ENCODE measurements at regions of chrX and their contacts with region 1.

Region 1: DNA sequence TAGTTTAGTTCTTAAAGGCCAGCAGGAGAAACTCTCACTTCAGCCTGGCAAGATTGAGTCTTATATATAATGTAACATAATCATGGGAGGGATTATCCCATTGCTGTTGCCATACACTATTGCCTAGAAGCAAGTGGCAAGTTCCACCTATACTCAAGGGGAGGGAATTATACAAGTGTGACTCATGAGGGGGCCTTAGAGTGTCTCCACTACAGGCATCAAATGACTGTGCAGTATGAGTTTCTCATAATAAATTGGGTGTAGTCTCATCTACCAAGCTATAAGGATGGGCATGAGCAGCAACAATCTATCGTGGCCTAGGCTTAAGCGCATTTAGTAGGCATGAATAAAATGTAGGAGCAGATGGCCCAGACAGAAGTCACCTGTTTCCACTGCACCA is 89.1 kb upstream of the C1GALT1C1 start:
- DNase-seq: no peak
- H3K4me3 ChIP-seq: no peak overlapping the region
- H3K27ac ChIP-seq: no peak overlapping the region
- H3K4me1 ChIP-seq: no peaks in the 10 kb centered on the region
- H3K27me3 ChIP-seq: no peaks in the 10 kb centered on the region
- CTCF ChIP-seq: no peak
- POLR2A ChIP-seq: no peak

Region 2: DNA sequence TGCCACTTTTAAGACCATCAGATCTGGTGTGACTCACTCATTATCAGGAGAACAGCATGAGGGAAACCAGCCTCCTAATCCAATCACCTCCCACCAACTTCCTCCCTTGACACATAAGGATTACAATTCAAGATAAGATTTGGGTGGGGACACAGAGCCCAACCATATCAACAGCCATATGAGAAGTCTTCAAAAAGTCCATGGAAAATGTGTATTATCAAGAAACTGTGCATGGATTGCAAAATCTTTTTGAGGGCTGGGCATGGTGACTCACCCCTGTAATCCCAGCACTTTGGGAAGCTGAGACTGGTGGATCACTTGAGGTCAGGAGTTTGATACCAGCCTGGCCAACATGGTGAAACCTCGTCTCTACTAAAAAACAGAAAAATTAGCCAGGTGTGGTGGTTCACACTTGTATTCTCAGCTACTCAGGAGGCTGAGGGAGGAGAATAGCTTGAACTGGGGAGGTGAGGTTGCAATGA is 909.7 kb before region 1 on chrX:
- intact Hi-C with region 1: loop called (anchors 5 kb)
- DNase-seq: no peak
- H3K4me3 ChIP-seq: no peak overlapping the region
- H3K27ac ChIP-seq: no peak overlapping the region
- H3K4me1 ChIP-seq: no peaks in the 10 kb centered on the region
- H3K27me3 ChIP-seq: no peaks in the 10 kb centered on the region
- CTCF ChIP-seq: no peak
- POLR2A ChIP-seq: no peak

Region 3: GRCh38 chrX:122004127-122004526 is 1285.2 kb after region 1 on chrX:
- intact Hi-C with region 1: no loop called
- DNase-seq: no peak
- H3K4me3 ChIP-seq: no peak overlapping the region
- H3K27ac ChIP-seq: no peak overlapping the region
- H3K4me1 ChIP-seq: no peaks in the 10 kb centered on the region
- H3K27me3 ChIP-seq: no peaks in the 10 kb centered on the region
- CTCF ChIP-seq: no peak
- POLR2A ChIP-seq: no peak

Measured in vagina (tissue), 2 donors.